AG04449 (cell line): ENCODE measurements at regions of chr11 and their contacts with region 1.

Region 1: GRCh38 chr11:11966826-11967668 is 41.4 kb downstream of the DKK3 start:
- DNase-seq: no peak
- H3K4me3 ChIP-seq: no peak overlapping the region
- CTCF ChIP-seq: peak; percentile 80

Region 2: GRCh38 chr11:11946180-11946579 is 20.9 kb before region 1 on chr11:
- CTCF ChIA-PET with region 1: interaction called, 33 read pairs
- POLR2A ChIA-PET with region 1: no interaction called
- DNase-seq: peak; percentile 34
- H3K4me3 ChIP-seq: no peak overlapping the region
- CTCF ChIP-seq: no peak

Region 3: DNA sequence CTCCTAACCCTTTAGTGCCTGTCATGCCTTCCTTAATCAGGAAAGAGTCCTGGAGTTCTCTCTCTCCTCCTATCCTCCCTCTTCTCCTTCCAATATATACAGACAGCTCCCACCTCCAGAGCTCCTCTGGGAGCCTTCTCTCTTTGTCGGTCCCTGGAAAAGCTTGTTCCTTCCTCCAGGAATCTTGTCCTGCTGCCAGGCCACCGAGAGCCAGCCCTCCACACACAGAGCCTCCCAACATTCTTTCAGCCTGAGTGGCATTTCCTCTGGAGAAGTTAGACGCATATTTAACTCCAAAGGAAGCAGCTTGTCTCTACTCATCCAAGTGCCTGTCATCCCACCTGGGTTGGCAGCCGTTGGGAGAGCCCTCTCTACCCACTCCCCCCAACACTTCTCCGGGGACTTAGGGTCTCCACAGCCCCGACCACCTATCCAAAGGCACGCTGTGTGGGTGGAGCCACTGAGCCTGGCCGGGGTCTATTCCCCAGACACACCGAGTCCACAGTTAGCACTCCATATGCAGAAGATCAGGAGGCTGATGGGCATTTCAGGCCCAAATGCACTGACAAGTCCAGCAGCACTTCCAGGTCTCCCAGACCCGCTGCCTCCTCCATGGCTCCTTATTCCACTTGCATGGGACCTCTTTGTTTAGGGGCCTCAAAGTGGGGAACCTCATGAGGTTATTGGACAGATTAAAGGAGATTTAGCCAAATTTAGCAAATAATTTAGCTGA is 10.3 kb after region 1 on chr11:
- CTCF ChIA-PET with region 1: interaction called, 18 read pairs
- POLR2A ChIA-PET with region 1: interaction called, 5 read pairs
- DNase-seq: peak; percentile 70
- H3K4me3 ChIP-seq: no peak overlapping the region; the same call in 1 of the 2 replicates
- CTCF ChIP-seq: no peak

Region 4: GRCh38 chr11:11987503-11988022 is 20.5 kb after region 1 on chr11:
- CTCF ChIA-PET with region 1: interaction called, 15 read pairs
- POLR2A ChIA-PET with region 1: no interaction called
- DNase-seq: no peak
- H3K4me3 ChIP-seq: no peak overlapping the region
- CTCF ChIP-seq: peak; percentile 28

Region 5: DNA sequence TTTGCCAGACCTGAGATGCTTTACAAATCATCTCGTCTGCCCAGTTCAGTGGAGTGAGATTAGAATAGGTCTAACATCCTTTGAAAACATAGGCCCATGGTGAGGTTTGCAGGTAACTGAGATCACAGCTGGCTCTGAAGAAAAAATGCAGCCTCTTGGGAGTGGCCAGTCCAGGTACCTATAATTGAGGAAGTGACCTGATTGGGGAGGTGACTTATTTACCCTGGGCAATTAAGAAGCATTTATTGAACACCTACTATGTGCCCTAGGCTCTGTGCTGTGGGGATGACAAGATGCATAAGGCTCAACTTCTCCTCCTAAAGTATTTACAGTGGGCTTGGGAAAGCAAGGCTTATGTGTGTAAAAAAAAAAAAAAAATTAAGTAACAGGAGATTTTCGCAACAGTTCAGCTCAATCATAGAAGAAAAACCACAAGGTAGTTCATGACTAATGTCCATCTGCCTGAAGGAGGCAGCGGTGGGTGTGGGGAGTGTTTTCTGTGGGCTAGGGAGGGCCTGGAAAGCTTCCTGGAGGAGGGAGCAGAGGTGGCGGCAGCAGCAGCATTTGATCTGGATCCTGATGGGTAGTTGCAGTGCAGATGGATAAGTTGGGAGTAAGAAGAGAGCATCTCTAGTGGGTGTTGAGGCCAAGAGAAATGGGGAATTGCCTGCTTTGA is 159.4 kb after region 1 on chr11:
- CTCF ChIA-PET with region 1: no interaction called
- POLR2A ChIA-PET with region 1: no interaction called
- DNase-seq: peak; percentile 49
- H3K4me3 ChIP-seq: no peak overlapping the region
- CTCF ChIP-seq: peak; percentile 13

Region 6: DNA sequence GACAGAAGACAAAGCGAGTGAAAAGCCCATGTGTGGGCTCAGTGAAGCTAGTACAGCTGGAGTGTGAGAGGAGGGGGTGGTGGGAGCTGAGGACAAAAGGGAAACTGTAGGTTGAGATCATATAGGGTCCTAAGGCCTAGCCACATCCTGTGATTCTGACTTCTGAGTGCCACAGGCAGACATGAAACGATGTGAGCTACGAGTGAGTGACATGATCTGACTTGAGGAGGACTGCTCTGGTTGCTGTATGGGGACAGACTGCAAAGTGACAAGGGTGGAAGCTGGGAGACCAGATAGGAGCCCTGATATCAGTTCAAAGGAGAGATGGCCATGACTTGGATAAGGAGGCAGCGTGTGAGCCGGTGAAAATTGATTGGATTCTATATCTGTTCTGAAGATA is 228.7 kb after region 1 on chr11:
- CTCF ChIA-PET with region 1: no interaction called
- POLR2A ChIA-PET with region 1: no interaction called
- DNase-seq: no peak
- H3K4me3 ChIP-seq: no peak overlapping the region
- CTCF ChIP-seq: no peak